Endothelial cell of umbilical vein (primary cell): ENCODE measurements at regions of chr14 and their contacts with region 1.

Region 1: DNA sequence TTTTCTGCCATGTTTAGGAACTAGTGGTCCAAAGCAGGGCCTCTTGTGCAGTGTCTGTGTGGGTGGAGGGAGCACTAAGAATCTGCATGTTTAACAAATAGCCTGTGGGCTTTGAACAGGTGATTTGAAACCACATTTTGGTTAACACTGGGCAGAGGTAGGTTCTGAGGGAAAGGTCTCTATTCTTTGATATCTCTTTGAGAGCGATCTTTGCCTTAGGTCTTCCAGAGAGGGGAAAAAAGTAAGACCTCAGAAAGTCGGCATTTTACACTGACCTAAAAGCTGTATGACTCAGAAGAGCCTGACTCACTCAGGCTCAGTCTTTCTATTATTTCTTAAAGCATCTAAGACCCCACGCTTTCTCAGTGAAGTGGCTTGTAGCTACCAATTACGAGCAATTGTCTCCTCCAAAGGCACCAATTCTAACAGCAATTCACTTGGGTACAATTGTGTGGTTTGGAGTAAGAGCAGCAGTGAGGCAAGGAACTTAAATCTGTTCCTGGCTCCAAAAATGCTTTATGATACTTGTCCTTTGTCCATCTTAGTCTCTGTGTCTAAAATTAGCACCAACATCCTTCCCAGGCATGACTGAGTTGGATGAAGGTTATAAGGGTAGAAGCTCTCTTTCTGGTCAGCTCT is 8.8 kb downstream of the EIF2B2 start:
- DNase-seq: peak; percentile 80
- H3K4me3 ChIP-seq: no peak overlapping the region
- H3K27ac ChIP-seq: peak overlapping the region; percentile 86
- H3K4me1 ChIP-seq: peaks cover 14% of the 10 kb centered on the region
- H3K27me3 ChIP-seq: no peaks in the 10 kb centered on the region
- CTCF ChIP-seq: no peak
- POLR2A ChIP-seq: peak; percentile 24

Region 2: GRCh38 chr14:75022655-75023054 is 11.2 kb after region 1 on chr14:
- CTCF ChIA-PET with region 1: interaction called, 10 read pairs
- POLR2A ChIA-PET with region 1: no interaction called
- dilution Hi-C with region 1: no loop called
- intact Hi-C with region 1: no loop called
- DNase-seq: peak; percentile 13
- H3K4me3 ChIP-seq: no peak overlapping the region
- H3K27ac ChIP-seq: no peak overlapping the region
- H3K4me1 ChIP-seq: peaks cover 20% of the 10 kb centered on the region
- H3K27me3 ChIP-seq: no peaks in the 10 kb centered on the region
- CTCF ChIP-seq: peak; percentile 33 to 53
- POLR2A ChIP-seq: no peak